AG04449 (cell line): ENCODE measurements at regions of chr17 and their contacts with region 1.

Region 1: DNA sequence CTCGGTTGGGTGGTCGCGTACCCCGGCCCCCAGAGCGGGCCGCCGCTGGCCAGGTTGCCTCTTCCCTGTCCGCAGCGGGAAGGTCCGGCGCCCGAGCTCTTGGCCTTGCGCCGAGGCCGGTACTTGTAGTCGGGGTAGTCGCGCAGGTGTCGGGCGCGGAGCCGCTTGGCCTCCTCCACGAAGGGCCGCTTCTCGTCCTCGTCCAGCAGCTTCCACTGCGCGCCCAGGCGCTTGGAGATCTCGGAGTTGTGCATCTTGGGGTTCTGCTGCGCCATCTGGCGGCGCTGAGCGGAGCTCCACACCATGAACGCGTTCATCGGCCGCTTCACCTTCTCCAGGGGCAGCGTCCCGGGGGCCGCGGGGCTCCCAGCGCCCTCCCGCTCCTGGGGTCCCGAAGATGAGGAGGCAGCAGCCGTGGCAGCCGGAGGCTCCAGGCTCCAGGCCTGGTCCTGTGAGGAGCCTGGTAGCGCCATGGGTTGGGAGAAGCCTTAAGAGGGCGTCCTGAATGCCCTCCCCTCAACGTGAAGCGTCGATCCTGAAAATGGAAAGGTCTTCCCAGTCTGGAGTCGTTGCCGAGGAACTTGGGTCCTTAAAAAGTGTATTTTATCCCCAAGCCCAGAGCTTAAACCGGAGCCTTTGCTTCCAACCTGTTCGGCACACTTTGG is 558 bp downstream of the SOX15 start:
- DNase-seq: no peak
- H3K4me3 ChIP-seq: peak overlapping the region; percentile 6; the same call in 1 of the 2 replicates
- CTCF ChIP-seq: peak; percentile 89

Region 2: DNA sequence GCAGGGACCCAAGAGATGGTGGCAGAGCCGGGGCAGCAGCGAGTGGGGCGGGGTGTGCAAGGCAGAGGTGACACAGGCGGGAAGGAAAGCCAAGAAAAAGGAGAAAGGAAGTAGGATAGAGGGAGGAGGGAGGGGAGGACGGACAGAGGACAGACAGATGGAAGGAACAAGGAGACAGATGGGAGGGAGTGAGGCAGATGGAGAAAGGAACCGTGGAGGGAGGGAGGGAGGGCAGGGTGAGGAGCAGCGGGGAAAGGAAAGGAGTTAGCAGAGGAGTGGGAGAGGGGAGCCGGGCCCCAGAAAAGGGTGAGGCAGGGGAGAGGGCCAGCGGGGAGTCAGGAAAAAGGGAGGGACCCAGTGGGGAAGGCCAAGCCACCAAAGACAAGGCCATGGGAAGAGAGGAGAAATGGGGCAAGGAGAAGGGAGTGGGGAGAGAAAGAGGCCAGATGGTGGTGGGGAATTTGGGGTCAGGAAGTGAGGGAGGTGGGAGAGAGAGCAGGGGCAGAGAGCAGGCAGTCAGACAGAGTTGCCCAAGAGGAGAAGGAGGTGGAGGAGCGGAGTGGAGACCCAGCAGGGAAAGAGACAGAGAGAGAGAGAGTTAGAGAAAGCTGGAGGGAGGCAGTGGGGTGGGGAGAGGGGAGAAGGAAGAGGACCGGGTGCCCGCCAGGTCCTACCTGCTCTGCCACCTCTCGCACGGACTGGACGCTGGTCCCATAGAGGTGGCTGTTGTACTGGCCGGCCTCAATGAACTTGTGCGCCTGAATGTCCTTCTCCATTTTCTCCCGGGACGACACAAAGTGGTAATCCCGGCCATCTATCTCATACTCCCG is 396.9 kb before region 1 on chr17:
- CTCF ChIA-PET with region 1: no interaction called
- POLR2A ChIA-PET with region 1: no interaction called
- DNase-seq: no peak
- H3K4me3 ChIP-seq: no peak overlapping the region
- CTCF ChIP-seq: no peak

Region 3: DNA sequence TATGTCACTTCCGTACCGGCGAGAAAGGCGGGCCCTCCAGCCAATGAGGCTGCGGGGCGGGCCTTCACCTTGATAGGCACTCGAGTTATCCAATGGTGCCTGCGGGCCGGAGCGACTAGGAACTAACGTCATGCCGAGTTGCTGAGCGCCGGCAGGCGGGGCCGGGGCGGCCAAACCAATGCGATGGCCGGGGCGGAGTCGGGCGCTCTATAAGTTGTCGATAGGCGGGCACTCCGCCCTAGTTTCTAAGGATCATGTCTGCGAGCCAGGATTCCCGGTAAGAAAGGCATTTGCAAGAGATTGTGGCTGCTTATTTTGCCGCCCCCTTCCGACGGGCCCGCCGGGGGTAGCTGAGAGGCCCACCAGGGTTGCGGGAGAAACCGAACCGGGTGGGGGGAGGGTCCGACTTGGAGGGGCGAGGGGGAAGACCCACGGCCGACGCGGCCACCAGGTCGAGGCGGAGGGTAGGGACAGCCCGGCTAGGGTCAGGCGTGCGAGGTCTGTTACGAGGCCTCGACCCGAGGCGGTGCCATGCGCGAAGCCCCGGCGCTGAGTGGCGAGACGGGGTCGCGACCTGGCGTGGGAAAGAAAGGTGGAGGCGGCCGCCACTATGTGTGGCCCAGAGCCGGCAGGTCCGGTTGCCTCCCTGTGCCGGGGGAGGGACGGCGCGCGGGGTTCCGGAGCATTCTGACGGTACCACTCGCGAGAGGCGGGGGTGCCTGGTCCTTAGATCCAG is 16.6 kb before region 1 on chr17:
- CTCF ChIA-PET with region 1: interaction called, 37 read pairs
- POLR2A ChIA-PET with region 1: interaction called, 45 read pairs
- DNase-seq: no peak
- H3K4me3 ChIP-seq: peak overlapping the region; percentile 100
- CTCF ChIP-seq: no peak

Region 4: DNA sequence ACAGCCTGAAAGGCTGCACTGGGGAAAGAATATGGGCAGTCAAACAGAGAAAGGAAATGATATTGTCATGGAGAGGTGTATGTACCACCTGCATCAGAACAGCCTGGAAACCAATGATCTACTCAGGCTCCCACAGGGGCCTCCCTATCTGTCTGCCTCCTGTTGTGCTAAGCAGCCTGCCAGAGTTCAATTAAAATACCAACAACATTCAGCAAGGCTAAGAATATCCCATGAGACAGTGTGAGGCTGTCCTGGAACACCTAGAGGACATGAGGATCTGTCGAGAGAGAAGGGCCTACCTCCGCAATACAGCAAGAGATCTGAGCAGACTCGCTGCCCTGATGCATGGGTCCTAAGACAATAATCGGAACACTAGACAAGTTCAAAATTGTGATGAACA is 16.9 kb after region 1 on chr17:
- CTCF ChIA-PET with region 1: interaction called, 61 read pairs
- POLR2A ChIA-PET with region 1: no interaction called
- DNase-seq: no peak
- H3K4me3 ChIP-seq: no peak overlapping the region
- CTCF ChIP-seq: no peak

Region 5: GRCh38 chr17:7614422-7615264 is 25.3 kb after region 1 on chr17 and contains the start of gene FXR2:
- CTCF ChIA-PET with region 1: interaction called, 61 read pairs
- POLR2A ChIA-PET with region 1: interaction called, 4 read pairs
- DNase-seq: peak; percentile 99
- H3K4me3 ChIP-seq: peak within 1 kb of the TSS; percentile 87
- CTCF ChIP-seq: peak; percentile 74